Adrenal gland (tissue), 19 donors: ENCODE measurements at regions of chr18 and their contacts with region 1.

Region 1: DNA sequence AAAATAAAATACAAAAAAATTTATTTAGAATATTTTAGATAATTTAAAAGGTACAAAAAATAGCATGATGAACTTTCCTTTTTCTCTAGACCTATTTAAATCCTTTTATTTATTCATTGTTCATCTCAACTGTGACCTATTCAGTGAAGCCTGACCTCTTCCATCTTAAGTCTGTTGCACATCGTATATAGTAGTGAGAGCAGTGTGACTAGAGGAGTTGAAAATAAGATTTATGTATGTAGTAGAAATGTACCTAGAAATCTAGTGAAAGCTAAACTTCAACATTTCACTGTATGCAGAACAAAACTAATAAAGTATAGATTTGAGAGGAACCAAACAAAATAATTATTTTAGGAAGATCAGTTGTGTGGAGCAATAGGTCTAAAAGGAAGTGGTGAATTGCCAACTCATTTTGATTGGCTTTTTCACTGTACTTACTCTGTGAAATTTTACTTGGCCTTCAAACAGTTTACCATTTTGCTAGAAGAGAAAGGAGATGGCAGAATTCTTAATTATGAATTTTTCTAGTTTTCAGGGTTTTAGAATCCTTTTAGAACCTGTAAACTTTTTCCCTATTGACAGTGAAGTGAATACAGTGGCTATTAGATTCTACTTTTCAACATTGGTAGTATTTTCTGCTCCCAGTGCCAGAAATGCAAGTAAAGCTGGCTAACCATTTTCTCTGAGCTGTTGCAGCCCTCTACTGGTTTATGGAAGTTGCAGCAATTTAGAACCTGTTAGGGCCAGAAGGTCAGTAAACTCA is 11.0 kb downstream of the ANKRD12 start:
- DNase-seq: peak in 6 of 7 donors; percentile 31 to 76 (median 52)
- H3K4me3 ChIP-seq: no peak overlapping the region
- H3K27ac ChIP-seq: peak overlapping the region in 2 of 5 donors; percentile 6 to 61
- H3K4me1 ChIP-seq: peaks cover 0 to 76% of the 10 kb centered on the region in 2 donors
- H3K27me3 ChIP-seq: no peaks in the 10 kb centered on the region
- CTCF ChIP-seq: peak; percentile 59 to 83 (median 79)
- POLR2A ChIP-seq: no peak

Region 2: DNA sequence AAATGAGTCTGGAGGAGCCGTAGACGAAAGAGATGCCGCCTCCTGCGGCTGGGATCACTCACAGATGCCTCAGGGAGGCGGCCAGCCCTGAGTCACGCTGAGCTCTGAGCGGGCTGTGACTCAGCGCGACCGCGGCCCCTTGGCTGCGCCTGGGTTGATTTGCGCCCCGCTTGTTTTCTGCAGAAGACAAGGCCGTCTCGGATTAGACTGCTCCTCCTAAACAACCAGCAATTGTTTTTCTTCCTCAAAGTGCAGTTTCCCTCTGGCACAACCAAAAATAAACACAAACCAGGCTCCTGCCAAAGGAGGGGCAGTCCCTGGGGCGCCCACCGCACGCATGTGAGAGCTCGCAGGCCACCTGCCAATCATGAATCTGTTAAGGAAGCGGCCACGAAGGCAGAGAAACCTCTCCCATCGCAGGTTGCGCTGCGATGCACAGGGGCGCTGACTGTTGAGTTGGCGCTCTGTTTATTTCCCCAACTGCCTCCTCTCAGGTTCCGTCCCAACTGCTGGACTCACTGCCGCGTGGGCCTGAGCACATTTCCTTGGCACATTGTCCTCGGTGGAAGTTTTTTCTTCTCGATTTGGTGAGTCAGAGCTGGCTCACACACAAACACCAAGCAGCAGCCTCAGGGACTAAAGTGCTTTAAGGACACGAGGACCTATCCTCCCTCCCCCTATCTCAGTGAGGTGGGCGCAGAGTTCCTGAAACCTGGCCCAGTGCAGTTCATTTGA is 130.3 kb before region 1 on chr18:
- intact Hi-C with region 1: no loop called
- DNase-seq: peak; percentile 76 to 92 (median 86)
- H3K4me3 ChIP-seq: peak overlapping the region in 1 of 4 donors; percentile 52
- H3K27ac ChIP-seq: peak overlapping the region; percentile 40 to 88 (median 81)
- H3K4me1 ChIP-seq: peaks cover 10 to 16% of the 10 kb centered on the region in 2 donors
- H3K27me3 ChIP-seq: no peaks in the 10 kb centered on the region
- CTCF ChIP-seq: no peak
- POLR2A ChIP-seq: peak in 1 of 2 donors; percentile 41

Region 3: GRCh38 chr18:9055185-9055584 is 92.4 kb before region 1 on chr18:
- intact Hi-C with region 1: no loop called
- DNase-seq: no peak
- H3K4me3 ChIP-seq: no peak overlapping the region
- H3K27ac ChIP-seq: no peak overlapping the region
- H3K4me1 ChIP-seq: peaks cover 0 to 10% of the 10 kb centered on the region in 2 donors
- H3K27me3 ChIP-seq: no peaks in the 10 kb centered on the region
- CTCF ChIP-seq: peak in 4 of 6 experiments; percentile 6 to 37 (median 31)
- POLR2A ChIP-seq: no peak

Region 4: GRCh38 chr18:9070212-9070611 is 77.4 kb before region 1 on chr18:
- intact Hi-C with region 1: loop called in 1 of 2 experiments (anchors 5 kb)
- DNase-seq: no peak
- H3K4me3 ChIP-seq: no peak overlapping the region
- H3K27ac ChIP-seq: no peak overlapping the region
- H3K4me1 ChIP-seq: peaks cover 6 to 7% of the 10 kb centered on the region in 2 donors
- H3K27me3 ChIP-seq: no peaks in the 10 kb centered on the region
- CTCF ChIP-seq: no peak
- POLR2A ChIP-seq: no peak

Region 5: DNA sequence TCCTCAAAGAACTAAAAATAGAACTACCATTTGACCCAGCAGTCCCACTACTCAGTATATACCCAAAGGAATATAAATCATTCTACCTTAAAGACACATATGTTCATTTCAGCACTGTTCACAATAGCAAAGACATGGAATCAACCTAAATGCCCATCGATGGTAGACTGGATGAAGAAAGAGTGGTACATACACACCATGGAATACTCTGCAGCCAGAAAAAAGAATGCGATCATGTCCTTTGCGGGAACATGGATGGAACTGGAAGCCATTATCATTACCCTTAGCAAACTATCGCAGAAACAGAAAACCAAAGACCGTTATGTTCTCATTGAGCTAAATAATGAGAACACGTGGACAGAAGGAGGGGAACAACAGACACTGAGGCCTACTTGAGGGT is 231.5 kb after region 1 on chr18:
- intact Hi-C with region 1: no loop called
- DNase-seq: no peak
- H3K4me3 ChIP-seq: no peak overlapping the region
- H3K27ac ChIP-seq: no peak overlapping the region
- H3K4me1 ChIP-seq: no peaks in the 10 kb centered on the region
- H3K27me3 ChIP-seq: no peaks in the 10 kb centered on the region
- CTCF ChIP-seq: no peak
- POLR2A ChIP-seq: no peak